ENCODE measurements at regions of chr3 and their contacts with region 1.

Region 1: DNA sequence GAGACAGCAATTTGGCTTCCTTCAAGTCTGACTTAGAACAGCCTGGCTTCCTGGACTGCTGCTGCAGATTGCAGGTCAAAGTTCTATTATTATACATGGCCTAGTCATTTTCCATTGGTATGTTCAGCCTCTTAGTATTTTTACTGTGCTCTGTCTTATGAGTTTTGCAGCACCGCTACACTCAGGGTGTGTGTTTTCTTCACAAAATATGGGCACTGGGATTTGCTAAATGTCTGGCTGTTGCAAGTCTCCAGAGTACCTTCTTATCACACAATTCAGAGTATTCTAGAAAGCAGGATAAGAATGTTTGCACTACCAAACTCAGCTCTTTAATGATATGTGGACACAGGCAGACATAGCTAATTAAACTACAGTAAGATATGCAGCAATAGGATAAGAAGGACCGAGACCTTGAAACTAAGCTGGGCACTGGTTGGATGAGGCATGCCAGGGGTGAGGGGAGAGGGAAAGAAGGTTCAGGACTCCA is 203.0 kb upstream of the PDZRN3 start:
- DNase-seq: no peak
- H3K4me3 ChIP-seq: no peak overlapping the region
- H3K27me3 ChIP-seq: no peaks in the 10 kb centered on the region
- CTCF ChIP-seq: no peak

Region 2: GRCh38 chr3:73801444-73801843 is 26.3 kb before region 1 on chr3:
- CTCF ChIA-PET with region 1: no interaction called
- POLR2A ChIA-PET with region 1: no interaction called
- DNase-seq: no peak
- H3K4me3 ChIP-seq: no peak overlapping the region
- H3K27me3 ChIP-seq: no peaks in the 10 kb centered on the region
- CTCF ChIP-seq: no peak

Region 3: GRCh38 chr3:73813310-73814292 is 14.2 kb before region 1 on chr3:
- CTCF ChIA-PET with region 1: interaction called, 10 read pairs
- POLR2A ChIA-PET with region 1: no interaction called
- DNase-seq: no peak
- H3K4me3 ChIP-seq: no peak overlapping the region
- H3K27me3 ChIP-seq: no peaks in the 10 kb centered on the region
- CTCF ChIP-seq: no peak

Measured in BJ (cell line).